Mammary epithelial cell (primary cell): ENCODE measurements at regions of chr10 and their contacts with region 1.

Region 1: GRCh38 chr10:33008499-33009243 is 50.6 kb upstream of the ITGB1 start:
- DNase-seq: peak; percentile 83
- H3K4me3 ChIP-seq: no peak overlapping the region
- H3K27ac ChIP-seq: peak overlapping the region; percentile 72
- H3K4me1 ChIP-seq: peaks cover 55% of the 10 kb centered on the region
- H3K27me3 ChIP-seq: no peaks in the 10 kb centered on the region
- CTCF ChIP-seq: peak; percentile 99

Region 2: GRCh38 chr10:32378363-32379317 is 630.0 kb before region 1 on chr10:
- CTCF ChIA-PET with region 1: no interaction called
- dilution Hi-C with region 1: no loop called
- in situ Hi-C with region 1: no loop called
- intact Hi-C with region 1: loop called (anchors 5 kb)
- DNase-seq: peak; percentile 82
- H3K4me3 ChIP-seq: peak overlapping the region; percentile 65 to 100 (median 95)
- H3K27ac ChIP-seq: peak overlapping the region; percentile 91
- H3K4me1 ChIP-seq: peaks cover 5% of the 10 kb centered on the region
- H3K27me3 ChIP-seq: no peaks in the 10 kb centered on the region
- CTCF ChIP-seq: no peak

Region 3: DNA sequence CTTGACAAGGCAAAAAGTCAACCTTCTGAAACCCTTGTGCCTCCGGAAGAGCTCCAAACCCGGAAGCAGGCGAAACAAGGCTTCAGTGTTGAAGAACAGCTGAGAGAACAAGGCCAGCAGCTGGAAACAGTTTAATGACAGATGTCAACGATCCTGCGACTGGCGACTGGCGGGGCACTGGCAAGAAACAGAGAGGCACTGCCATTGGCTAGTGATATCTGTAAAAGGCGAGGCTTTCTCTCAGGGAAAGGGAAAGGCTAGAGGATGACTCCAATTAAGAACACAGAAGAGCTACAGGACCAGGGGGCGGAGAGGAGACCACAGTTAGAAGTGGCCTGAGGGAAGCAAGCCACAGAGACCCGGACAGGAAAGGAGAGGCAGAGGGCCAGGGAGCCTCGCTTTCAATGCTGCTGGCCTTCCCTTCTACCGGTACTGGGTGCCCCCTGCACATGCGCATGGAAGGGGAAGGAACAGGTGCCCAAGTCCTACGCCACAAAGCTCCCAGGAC is 70.1 kb before region 1 on chr10:
- CTCF ChIA-PET with region 1: interaction called, 3 read pairs
- dilution Hi-C with region 1: no loop called
- in situ Hi-C with region 1: no loop called
- intact Hi-C with region 1: loop called (anchors 1 kb)
- DNase-seq: peak; percentile 37
- H3K4me3 ChIP-seq: peak overlapping the region in 2 of 3 experiments; percentile 3 to 12
- H3K27ac ChIP-seq: peak overlapping the region; percentile 17
- H3K4me1 ChIP-seq: peaks cover 56% of the 10 kb centered on the region
- H3K27me3 ChIP-seq: no peaks in the 10 kb centered on the region
- CTCF ChIP-seq: no peak

Region 4: DNA sequence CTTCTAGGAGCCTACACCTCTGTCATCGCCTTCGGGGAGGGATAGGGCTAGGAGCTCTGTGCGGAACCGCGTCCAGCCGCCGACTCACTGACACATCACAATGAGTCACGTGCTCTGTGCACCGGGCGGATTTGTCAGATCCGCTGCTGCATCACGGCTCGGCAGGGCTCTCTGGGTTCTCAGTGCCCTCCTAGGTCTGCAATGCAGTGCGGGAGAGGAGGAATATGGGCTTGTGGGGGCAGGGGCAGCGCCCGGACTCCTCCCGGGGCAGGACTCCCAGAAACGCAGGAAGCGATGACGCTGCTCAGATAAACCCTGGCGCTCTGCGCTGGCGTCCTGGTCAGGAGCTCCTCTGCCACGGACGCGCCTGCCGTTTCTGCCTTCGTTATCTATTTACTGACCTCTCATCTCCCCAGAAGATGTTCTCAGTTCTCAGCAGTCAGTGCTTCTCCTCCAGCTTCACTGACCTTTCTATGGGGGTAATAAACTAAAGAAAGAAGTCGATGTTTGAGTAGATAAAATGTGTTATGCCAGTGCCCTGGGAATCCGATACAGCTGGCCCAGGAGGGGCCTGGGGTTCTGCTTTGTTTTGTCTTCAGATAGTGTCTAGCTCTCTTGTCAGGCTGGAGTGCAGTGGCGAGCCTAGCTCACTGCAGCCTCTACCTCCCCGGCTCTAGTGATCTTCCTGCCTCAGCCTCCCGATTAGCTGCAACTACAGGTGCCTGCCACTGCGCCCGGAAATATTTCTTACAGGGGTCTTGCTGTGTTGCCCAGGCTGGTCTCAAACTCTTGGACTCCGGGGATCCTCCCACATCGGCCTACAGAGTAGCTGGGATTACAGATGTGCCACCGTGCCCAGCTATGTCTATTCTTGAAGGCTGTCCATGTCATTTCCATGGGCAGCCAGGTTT is 27.9 kb before region 1 on chr10:
- CTCF ChIA-PET with region 1: interaction called, 3 read pairs
- dilution Hi-C with region 1: no loop called
- in situ Hi-C with region 1: no loop called
- intact Hi-C with region 1: loop called (anchors 1 kb)
- DNase-seq: peak; percentile 100
- H3K4me3 ChIP-seq: peak overlapping the region; percentile 24 to 51 (median 45)
- H3K27ac ChIP-seq: peak overlapping the region; percentile 99
- H3K4me1 ChIP-seq: peaks cover 51% of the 10 kb centered on the region
- H3K27me3 ChIP-seq: no peaks in the 10 kb centered on the region
- CTCF ChIP-seq: no peak

Region 5: GRCh38 chr10:33134011-33134751 is 125.5 kb after region 1 on chr10:
- CTCF ChIA-PET with region 1: no interaction called
- dilution Hi-C with region 1: no loop called
- in situ Hi-C with region 1: loop called (anchors 5 to 10 kb)
- intact Hi-C with region 1: loop called (anchors 1 kb)
- DNase-seq: peak; percentile 100
- H3K4me3 ChIP-seq: no peak overlapping the region
- H3K27ac ChIP-seq: peak overlapping the region; percentile 96
- H3K4me1 ChIP-seq: peaks cover 77% of the 10 kb centered on the region
- H3K27me3 ChIP-seq: no peaks in the 10 kb centered on the region
- CTCF ChIP-seq: no peak

Region 6: GRCh38 chr10:34637418-34637911 is 1628.8 kb after region 1 on chr10:
- CTCF ChIA-PET with region 1: no interaction called
- dilution Hi-C with region 1: no loop called
- in situ Hi-C with region 1: no loop called
- intact Hi-C with region 1: loop called (anchors 2 kb)
- DNase-seq: peak; percentile 18
- H3K4me3 ChIP-seq: no peak overlapping the region
- H3K27ac ChIP-seq: no peak overlapping the region
- H3K4me1 ChIP-seq: peaks cover 5% of the 10 kb centered on the region
- H3K27me3 ChIP-seq: no peaks in the 10 kb centered on the region
- CTCF ChIP-seq: peak; percentile 97 to 98